ENCODE measurements at regions of chr3 and their contacts with region 1.

Region 1: GRCh38 chr3:193788189-193788991 is 195.4 kb downstream of the OPA1 start:
- DNase-seq: no peak
- H3K4me3 ChIP-seq: no peak overlapping the region
- H3K27ac ChIP-seq: peak overlapping the region in 2 of 4 donors; percentile 32 to 59
- H3K4me1 ChIP-seq: peaks cover 13 to 24% (median 21%) of the 10 kb centered on the region in 4 donors
- H3K27me3 ChIP-seq: peaks cover 0 to 4% (median 0%) of the 10 kb centered on the region in 4 donors
- CTCF ChIP-seq: peak; percentile 77 to 87 (median 79)
- EP300 ChIP-seq: no peak
- POLR2A ChIP-seq: no peak

Region 2: GRCh38 chr3:193605876-193606275 is 182.5 kb before region 1 on chr3:
- intact Hi-C with region 1: no loop called
- DNase-seq: no peak
- H3K4me3 ChIP-seq: no peak overlapping the region
- H3K27ac ChIP-seq: no peak overlapping the region
- H3K4me1 ChIP-seq: peaks cover 0 to 8% (median 3%) of the 10 kb centered on the region in 4 donors
- H3K27me3 ChIP-seq: no peaks in the 10 kb centered on the region
- CTCF ChIP-seq: peak; percentile 49 to 89 (median 63)
- EP300 ChIP-seq: no peak
- POLR2A ChIP-seq: no peak

Region 3: DNA sequence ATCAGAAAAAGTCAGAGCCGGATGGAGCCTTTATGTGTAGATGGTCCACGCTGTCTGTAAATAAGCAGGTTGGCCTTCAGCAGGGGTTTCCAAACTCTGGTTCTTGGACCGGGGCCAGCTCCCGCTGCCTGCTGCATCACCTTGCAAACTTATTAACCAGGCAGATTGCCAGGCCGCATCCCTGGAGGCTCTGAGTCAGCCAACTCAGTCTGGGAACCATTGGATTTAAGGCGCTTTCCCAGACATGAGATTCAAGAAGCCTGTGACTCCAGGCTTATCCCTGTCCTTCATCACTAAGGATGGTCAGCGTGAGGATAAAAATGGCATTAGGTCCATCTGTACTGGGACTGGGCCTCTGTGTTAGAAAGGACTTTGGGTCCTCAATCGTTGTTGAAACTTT is 17.1 kb after region 1 on chr3:
- intact Hi-C with region 1: no loop called
- DNase-seq: no peak
- H3K4me3 ChIP-seq: no peak overlapping the region
- H3K27ac ChIP-seq: no peak overlapping the region
- H3K4me1 ChIP-seq: peaks cover 0 to 6% (median 5%) of the 10 kb centered on the region in 4 donors
- H3K27me3 ChIP-seq: no peaks in the 10 kb centered on the region
- CTCF ChIP-seq: no peak
- EP300 ChIP-seq: no peak
- POLR2A ChIP-seq: no peak

Region 4: GRCh38 chr3:193971261-193971751 is 182.9 kb after region 1 on chr3:
- intact Hi-C with region 1: loop called (anchors 10 kb)
- DNase-seq: no peak
- H3K4me3 ChIP-seq: no peak overlapping the region
- H3K27ac ChIP-seq: no peak overlapping the region
- H3K4me1 ChIP-seq: peaks cover 8 to 32% (median 24%) of the 10 kb centered on the region in 4 donors
- H3K27me3 ChIP-seq: no peaks in the 10 kb centered on the region
- CTCF ChIP-seq: no peak
- EP300 ChIP-seq: no peak
- POLR2A ChIP-seq: no peak

Region 5: DNA sequence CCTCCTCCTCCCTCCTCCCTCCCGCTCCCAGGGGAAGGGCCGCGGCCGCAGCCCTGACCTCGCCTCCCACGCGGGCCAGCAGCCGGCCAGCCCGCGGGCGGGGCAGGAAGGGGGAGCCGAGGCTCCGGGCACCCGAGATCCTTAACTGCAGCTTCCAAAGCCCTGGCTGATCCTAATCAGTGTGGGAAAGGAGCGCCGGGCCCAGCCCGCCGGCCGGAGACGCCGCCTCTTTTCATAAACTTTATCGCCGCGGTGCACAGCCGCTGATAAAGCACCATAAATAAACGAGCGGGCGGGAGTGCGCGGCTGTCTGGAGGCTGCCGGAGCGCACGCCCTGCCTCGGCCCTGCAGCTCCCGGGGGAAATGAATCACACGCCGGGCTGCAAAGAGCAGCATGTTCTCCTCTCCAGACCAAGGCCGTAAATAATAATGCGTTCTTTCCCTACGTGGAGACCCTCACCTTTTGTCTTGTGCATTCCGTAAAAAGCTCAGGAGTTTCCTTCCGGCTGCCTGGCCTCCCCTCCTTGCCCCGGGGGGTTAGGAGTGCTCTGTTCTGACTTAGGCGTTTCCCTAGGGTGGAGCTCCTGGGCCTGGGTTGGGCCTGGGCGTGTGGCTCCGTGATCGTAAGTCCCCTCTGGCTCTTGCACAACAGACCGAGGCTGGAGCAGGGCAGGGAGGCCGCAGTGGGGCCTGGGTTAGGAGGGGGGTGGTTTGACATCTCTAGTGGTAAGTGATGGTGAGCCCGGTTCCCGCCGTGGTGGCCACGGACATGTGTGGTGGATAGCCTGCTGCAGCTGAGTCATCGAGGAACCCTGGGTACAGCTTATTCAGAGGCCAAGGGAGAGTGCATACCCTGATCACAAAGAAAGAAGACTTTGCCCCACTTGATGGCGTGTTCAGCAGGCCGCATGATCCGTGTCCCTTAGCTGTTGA is 215.0 kb after region 1 on chr3:
- intact Hi-C with region 1: loop called (anchors 5 kb)
- DNase-seq: peak; percentile 97
- H3K4me3 ChIP-seq: peak overlapping the region; percentile 54 to 58 (median 56)
- H3K27ac ChIP-seq: peak overlapping the region; percentile 75 to 82 (median 76)
- H3K4me1 ChIP-seq: peaks cover 23 to 38% (median 32%) of the 10 kb centered on the region in 4 donors
- H3K27me3 ChIP-seq: no peaks in the 10 kb centered on the region
- CTCF ChIP-seq: no peak
- EP300 ChIP-seq: no peak
- POLR2A ChIP-seq: no peak